Sigmoid colon (tissue), 7 donors: ENCODE measurements at regions of chr11 and their contacts with region 1.

Region 1: GRCh38 chr11:78946945-78947902 is 372.6 kb upstream of the NARS2 start:
- DNase-seq: peak; percentile 76
- H3K4me3 ChIP-seq: no peak overlapping the region
- H3K27ac ChIP-seq: peak overlapping the region in 2 of 4 donors; percentile 7 to 55
- H3K4me1 ChIP-seq: peaks cover 0 to 18% (median 13%) of the 10 kb centered on the region in 4 donors
- H3K27me3 ChIP-seq: no peaks in the 10 kb centered on the region
- CTCF ChIP-seq: no peak
- EP300 ChIP-seq: no peak
- POLR2A ChIP-seq: no peak

Region 2: GRCh38 chr11:79076526-79077115 is 129.4 kb after region 1 on chr11:
- intact Hi-C with region 1: loop called (anchors 10 kb)
- DNase-seq: no peak
- H3K4me3 ChIP-seq: no peak overlapping the region
- H3K27ac ChIP-seq: no peak overlapping the region
- H3K4me1 ChIP-seq: peaks cover 3 to 29% (median 25%) of the 10 kb centered on the region in 4 donors
- H3K27me3 ChIP-seq: no peaks in the 10 kb centered on the region
- CTCF ChIP-seq: peak; percentile 15 to 60 (median 44)
- EP300 ChIP-seq: no peak
- POLR2A ChIP-seq: no peak